Activated CD8-positive, alpha-beta T cell treated with anti-CD3 and anti-CD28 coated beads for 36 hours (primary cell): ENCODE measurements at regions of chr4 and their contacts with region 1.

Region 1: DNA sequence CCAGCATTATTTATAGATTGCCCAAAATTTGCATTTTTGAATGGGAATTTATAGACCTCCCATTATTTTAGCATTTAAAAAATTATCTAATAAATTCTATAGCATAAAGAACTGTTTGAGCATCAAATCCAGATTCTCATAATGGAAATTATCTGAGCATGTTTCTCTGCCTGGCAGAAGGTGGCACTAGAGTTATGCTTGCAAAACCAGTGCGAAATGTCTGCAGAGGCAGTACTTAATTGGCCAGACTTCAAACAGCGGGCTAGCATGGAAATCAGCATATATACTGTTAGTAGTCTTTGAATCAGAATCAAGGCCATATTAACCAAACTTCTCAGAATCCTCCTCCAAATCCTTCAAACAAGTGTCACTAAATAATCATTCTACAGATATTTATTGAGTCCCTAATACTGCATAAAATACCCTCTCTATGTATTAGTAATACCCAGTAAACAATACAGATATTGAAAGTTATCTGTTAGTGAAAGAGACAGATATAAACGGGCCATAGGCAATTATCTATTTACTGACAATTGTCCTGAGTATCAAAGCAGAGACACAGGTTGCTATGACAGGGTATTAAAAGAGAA is 78.7 kb upstream of the DCLK2 start:
- DNase-seq: no peak
- ATAC-seq: no peak
- H3K4me3 Mint-ChIP-seq: no peak overlapping the region
- H3K27ac Mint-ChIP-seq: no peak overlapping the region
- H3K4me1 Mint-ChIP-seq: no peaks in the 10 kb centered on the region
- H3K27me3 Mint-ChIP-seq: peaks cover 4% of the 10 kb centered on the region
- CTCF ChIP-seq: peak; percentile 48

Region 2: GRCh38 chr4:149752729-149753128 is 246.9 kb before region 1 on chr4:
- CTCF ChIA-PET with region 1: no interaction called
- POLR2A ChIA-PET with region 1: no interaction called
- intact Hi-C with region 1: no loop called
- DNase-seq: no peak
- ATAC-seq: no peak
- H3K4me3 Mint-ChIP-seq: no peak overlapping the region
- H3K27ac Mint-ChIP-seq: no peak overlapping the region
- H3K4me1 Mint-ChIP-seq: no peaks in the 10 kb centered on the region
- H3K27me3 Mint-ChIP-seq: no peaks in the 10 kb centered on the region
- CTCF ChIP-seq: no peak

Region 3: DNA sequence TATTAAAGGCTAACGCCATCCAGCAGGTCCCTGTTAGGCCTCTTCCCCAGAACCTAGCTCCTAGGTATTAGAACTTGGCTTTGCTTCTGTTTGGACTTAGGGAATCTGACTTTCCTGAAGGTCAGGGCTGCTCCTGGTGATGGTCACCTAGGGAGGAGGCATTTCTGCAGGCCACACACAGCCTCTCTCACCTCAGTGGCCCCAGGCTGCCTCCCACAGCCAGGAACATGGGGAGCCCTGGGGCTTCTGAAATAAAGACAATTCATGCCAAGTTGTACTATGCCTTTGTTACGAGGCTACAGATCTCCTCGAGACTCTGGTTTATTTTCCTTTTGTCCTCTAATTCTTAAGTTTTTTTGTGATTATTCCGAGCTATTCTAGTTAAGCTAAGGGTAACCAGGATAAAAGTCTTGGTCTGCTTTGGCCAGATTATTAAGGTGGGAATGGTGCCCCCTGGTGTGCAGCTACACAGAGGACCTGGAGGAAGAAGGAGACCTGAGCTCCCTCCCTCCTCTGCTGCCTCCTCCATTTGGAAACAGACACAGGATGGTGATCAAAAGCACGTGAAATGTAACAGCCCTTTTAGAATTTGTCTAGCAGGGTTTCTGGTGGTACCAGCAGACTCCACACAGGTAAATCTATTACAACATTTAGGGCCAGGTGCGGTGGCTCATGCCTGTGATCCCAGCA is 209.7 kb after region 1 on chr4:
- CTCF ChIA-PET with region 1: interaction called, 4 read pairs
- POLR2A ChIA-PET with region 1: no interaction called
- intact Hi-C with region 1: loop called (anchors 10 kb)
- DNase-seq: peak; percentile 60
- ATAC-seq: peak; percentile 39
- H3K4me3 Mint-ChIP-seq: no peak overlapping the region
- H3K27ac Mint-ChIP-seq: no peak overlapping the region
- H3K4me1 Mint-ChIP-seq: no peaks in the 10 kb centered on the region
- H3K27me3 Mint-ChIP-seq: peaks cover 9% of the 10 kb centered on the region
- CTCF ChIP-seq: peak; percentile 27